WTC11 (cell line): ENCODE measurements at regions of chr11 and their contacts with region 1.

Region 1: DNA sequence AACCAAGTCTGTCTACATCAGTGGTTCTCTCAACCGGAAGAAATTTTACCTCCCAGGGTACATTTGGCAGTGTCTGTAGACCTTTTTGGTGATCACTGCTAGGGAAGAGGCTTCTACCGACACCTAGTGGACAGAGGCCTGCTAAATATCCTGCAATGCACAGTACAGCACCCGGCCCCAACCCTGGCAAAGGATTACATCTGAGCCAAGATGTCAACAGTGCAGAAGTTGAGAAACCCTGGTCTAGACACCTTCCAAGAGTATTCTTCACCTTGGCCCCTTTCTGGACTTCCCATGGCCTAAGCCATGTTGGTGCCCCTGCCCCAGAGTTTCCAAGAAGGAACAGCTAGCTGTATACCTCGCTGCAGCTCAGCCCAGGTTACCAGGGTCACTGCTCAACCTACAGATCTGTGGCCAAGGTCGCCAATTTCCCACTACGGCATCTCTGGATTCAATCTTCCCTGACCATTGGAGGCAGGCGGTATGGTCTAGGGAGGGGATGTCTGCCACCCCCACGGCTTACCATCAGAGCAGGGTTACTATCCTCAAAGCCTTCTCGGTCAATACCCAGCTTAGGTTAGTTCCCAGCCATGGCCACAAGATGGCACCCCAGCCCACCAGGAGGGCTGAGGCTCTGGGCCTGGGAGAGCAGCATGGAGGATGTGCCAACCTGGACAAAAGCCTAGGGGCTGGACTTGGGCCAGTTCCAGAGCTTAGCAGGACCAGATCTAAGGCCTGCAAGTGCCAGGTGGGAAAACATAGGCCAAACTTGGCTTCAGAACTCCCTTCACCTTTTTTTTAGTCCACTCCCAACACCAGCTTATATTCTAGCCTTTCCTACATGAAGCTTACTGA is 3.7 kb upstream of the KCNC1 start:
- DNase-seq: peak; percentile 90
- ATAC-seq: peak; percentile 77
- H3K4me3 Mint-ChIP-seq: no peak overlapping the region
- H3K27ac Mint-ChIP-seq: no peak overlapping the region
- H3K4me1 Mint-ChIP-seq: peaks cover 3% of the 10 kb centered on the region; the same call in 1 of the 2 replicates
- H3K27me3 Mint-ChIP-seq: peaks cover 54% of the 10 kb centered on the region
- CTCF ChIP-seq: peak; percentile 41

Region 2: DNA sequence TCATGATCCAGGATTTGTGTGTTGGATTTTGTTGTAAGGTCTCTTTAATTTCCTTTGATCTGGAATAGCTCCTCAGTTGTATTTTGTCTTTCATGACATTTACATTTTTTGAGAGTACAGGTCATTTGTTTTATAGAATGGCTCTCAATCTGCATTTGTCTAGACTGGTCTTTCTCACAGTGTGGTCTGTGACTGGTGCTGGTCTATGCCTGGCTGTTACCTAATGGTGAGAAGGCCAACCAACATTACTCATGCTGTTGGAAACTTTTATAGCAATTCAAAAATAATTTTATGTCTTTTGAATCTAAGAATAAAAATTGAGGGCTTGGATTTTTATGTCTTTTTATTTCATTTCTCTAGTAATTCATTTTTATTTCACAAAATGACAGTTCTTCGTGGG is 383.2 kb before region 1 on chr11:
- CTCF ChIA-PET with region 1: no interaction called
- POLR2A ChIA-PET with region 1: no interaction called
- DNase-seq: no peak
- ATAC-seq: no peak
- H3K4me3 Mint-ChIP-seq: no peak overlapping the region
- H3K27ac Mint-ChIP-seq: no peak overlapping the region
- H3K4me1 Mint-ChIP-seq: peaks cover 21% of the 10 kb centered on the region
- H3K27me3 Mint-ChIP-seq: peaks cover 66% of the 10 kb centered on the region
- CTCF ChIP-seq: no peak

Region 3: DNA sequence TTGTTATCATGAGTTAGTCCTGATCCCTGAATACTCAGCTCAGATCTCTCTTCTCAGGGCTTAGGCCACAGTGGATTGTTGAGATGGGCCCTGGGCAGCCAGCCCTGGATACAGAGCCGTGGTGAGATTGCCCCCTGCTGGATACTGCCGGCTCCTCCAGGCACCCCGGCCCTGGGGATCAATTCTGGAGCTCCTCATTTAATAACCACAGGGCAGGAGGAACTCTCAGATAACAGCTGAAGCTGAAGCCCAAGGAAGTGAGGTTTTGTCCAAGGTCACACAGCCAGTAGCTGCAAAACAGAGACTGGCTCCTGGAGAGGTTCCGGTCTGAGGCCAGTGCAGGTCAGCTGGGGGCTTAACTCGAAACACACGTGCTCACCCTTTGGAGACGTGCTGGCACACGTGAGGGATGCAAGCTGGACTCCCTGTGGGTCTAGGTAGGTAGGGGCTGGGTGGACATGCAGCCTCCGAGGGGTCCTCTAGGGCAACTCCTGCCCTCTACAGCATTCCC is 202.6 kb before region 1 on chr11:
- CTCF ChIA-PET with region 1: interaction called, 14 read pairs
- POLR2A ChIA-PET with region 1: no interaction called
- DNase-seq: peak; percentile 82
- ATAC-seq: peak; percentile 95
- H3K4me3 Mint-ChIP-seq: no peak overlapping the region
- H3K27ac Mint-ChIP-seq: no peak overlapping the region
- H3K4me1 Mint-ChIP-seq: peaks cover 5% of the 10 kb centered on the region; the same call in 1 of the 2 replicates
- H3K27me3 Mint-ChIP-seq: no peaks in the 10 kb centered on the region; the same call in 1 of the 2 replicates
- CTCF ChIP-seq: peak; percentile 73

Region 4: DNA sequence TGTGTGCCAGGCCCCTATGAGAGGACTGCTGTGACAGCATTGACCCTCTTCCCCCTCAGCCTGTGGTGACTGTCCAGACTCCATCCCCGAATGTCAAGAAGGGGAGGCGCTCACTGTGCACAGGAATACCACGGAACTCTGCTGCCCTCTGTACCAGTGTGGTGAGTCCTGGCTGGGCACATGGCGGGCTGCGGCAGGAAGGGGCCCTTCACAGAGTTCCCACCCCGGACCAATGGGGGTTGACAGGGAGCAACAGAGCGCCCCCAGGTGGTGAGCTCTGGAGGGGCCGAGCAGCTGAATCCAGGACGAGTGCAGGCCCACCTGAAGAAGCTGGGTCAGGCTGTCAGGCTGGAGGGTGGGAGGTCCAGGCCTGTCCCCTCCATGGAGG is 95.3 kb before region 1 on chr11:
- CTCF ChIA-PET with region 1: interaction called, 11 read pairs
- POLR2A ChIA-PET with region 1: no interaction called
- DNase-seq: peak; percentile 54
- ATAC-seq: peak; percentile 46
- H3K4me3 Mint-ChIP-seq: no peak overlapping the region
- H3K27ac Mint-ChIP-seq: no peak overlapping the region
- H3K4me1 Mint-ChIP-seq: no peaks in the 10 kb centered on the region
- H3K27me3 Mint-ChIP-seq: no peaks in the 10 kb centered on the region; the same call in 1 of the 2 replicates
- CTCF ChIP-seq: peak; percentile 54

Region 5: GRCh38 chr11:17752144-17752543 is 21.3 kb after region 1 on chr11:
- CTCF ChIA-PET with region 1: interaction called, 28 read pairs
- POLR2A ChIA-PET with region 1: no interaction called
- DNase-seq: no peak
- ATAC-seq: no peak
- H3K4me3 Mint-ChIP-seq: no peak overlapping the region
- H3K27ac Mint-ChIP-seq: no peak overlapping the region
- H3K4me1 Mint-ChIP-seq: no peaks in the 10 kb centered on the region
- H3K27me3 Mint-ChIP-seq: no peaks in the 10 kb centered on the region; the same call in none of the 2 replicates
- CTCF ChIP-seq: no peak

Region 6: DNA sequence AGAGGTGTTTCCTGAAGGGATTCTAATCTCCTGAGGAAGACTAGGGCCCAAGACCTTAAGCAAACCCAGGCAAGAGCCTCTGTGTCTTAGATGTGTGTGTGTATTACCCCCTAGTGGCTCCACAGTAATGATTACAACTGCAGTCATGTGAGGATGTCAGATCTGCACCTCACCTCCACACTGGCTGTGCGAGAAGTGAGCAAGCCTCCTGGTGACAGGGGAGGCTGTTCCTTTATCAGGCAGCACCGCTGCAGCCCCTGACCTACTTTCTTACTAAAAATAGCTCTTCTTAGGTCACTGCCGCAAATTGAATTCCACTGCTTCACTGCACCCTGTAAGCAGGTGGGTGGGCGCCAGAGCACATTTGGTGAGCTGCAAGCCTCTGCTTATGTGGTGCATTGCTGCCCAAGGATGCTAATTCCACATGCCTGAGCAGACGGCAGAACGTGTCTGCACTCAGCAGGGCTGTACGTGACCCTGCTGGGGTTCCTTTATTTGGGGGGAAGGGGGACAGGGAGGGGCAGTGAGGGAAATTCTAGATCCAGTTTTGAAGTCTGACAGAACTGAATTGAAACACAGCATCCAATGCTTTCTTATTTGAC is 116.1 kb after region 1 on chr11:
- CTCF ChIA-PET with region 1: interaction called, 16 read pairs
- POLR2A ChIA-PET with region 1: no interaction called
- DNase-seq: peak; percentile 14
- ATAC-seq: peak; percentile 74
- H3K4me3 Mint-ChIP-seq: no peak overlapping the region
- H3K27ac Mint-ChIP-seq: no peak overlapping the region
- H3K4me1 Mint-ChIP-seq: no peaks in the 10 kb centered on the region; the same call in 1 of the 2 replicates
- H3K27me3 Mint-ChIP-seq: no peaks in the 10 kb centered on the region
- CTCF ChIP-seq: no peak

Region 7: DNA sequence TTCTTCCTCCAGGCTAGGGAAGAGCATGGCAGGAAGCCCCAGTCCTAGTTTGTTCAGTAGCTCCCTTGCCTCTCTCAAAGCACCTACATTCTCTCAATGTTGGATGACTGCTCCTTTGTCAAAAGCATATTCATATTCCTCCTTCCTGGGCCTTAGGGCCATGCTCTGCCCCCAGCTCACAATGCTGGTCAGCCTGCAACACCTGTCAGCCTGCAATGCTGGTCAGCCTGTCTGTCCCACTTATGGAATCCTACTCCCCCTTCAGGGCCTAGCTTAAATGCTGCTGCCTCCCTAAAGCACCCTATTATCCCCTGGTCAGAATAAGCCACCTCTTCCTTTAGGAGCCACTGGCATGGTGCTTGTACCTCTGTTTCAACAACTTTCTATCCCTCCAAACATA is 236.8 kb after region 1 on chr11:
- CTCF ChIA-PET with region 1: interaction called, 82 read pairs
- POLR2A ChIA-PET with region 1: no interaction called
- DNase-seq: no peak
- ATAC-seq: no peak
- H3K4me3 Mint-ChIP-seq: no peak overlapping the region
- H3K27ac Mint-ChIP-seq: no peak overlapping the region
- H3K4me1 Mint-ChIP-seq: peaks cover 7% of the 10 kb centered on the region; the same call in 1 of the 2 replicates
- H3K27me3 Mint-ChIP-seq: no peaks in the 10 kb centered on the region; the same call in 1 of the 2 replicates
- CTCF ChIP-seq: no peak